ENCODE measurements at regions of chr12 and their contacts with region 1.

Region 1: GRCh38 chr12:7188562-7189397 is 706 bp upstream of the PEX5 start:
- DNase-seq: peak; percentile 76
- ATAC-seq: peak; percentile 69

Region 2: GRCh38 chr12:7129872-7130680 is 58.7 kb before region 1 on chr12 and contains the start of gene CLSTN3:
- intact Hi-C with region 1: no loop called
- DNase-seq: no peak
- ATAC-seq: peak; percentile 80
- total RNA-seq, gene CLSTN3: 5.7 TPM

Region 3: DNA sequence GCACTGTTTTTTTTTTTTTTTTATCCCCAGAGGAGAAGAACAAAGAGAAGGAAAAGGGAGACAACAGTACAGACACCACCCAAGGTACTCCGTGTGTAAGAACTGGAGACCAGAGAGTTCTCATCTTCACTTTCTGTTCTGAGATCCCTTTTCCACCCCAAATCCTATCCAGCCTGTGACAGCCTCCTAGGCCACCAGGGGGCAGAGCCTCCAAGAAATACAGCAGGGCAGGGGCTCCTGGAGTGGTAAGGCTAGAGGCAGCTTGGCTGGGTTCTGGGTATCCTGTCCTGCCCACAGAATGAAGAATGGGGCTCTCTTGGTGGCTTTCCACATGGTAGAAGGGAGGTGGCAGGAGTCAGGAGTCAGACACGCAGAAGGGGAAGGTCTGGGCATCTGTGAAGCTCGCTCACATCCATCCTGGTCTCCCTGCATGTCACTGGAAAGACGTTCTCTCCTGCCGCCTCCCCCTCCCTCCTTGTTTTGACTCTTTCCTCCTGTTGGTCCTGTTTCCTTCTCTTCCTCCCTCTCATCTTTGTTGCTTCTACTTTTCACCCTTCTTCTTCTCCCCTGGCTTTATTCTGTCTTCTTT is 46.6 kb before region 1 on chr12:
- intact Hi-C with region 1: loop called (anchors 2 kb)
- DNase-seq: no peak
- ATAC-seq: peak; percentile 31